Posterior vena cava (tissue), 2 donors: ENCODE measurements at regions of chr1 and their contacts with region 1.

Region 1: GRCh38 chr1:56397811-56398231 is 181.5 kb downstream of the PLPP3 start:
- DNase-seq: no peak

Region 2: DNA sequence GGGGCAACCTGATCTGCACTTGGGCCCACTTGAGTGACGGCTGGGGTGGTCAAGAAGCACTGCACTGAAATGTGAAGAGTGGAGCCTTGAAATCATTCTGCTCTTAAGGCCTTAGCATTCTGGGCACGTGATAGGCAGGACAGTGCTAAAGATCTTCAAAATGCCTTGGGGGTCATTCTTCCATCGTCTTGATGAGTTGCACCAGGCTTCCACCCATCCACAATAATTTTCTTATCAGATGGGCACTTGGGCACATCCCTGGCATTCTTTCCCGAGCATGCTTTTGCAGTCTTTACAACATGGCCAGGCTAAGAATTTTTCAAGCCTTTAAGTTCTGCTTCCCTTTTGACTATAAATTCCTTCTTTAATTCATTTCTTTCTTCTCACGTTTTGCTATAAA is 357.1 kb before region 1 on chr1:
- intact Hi-C with region 1: loop called in 1 of 2 experiments (anchors 5 kb)
- DNase-seq: no peak

Region 3: GRCh38 chr1:56424744-56425508 is 27.1 kb after region 1 on chr1:
- intact Hi-C with region 1: loop called in 1 of 2 experiments (anchors 1 kb)
- DNase-seq: peak; percentile 87

Region 4: DNA sequence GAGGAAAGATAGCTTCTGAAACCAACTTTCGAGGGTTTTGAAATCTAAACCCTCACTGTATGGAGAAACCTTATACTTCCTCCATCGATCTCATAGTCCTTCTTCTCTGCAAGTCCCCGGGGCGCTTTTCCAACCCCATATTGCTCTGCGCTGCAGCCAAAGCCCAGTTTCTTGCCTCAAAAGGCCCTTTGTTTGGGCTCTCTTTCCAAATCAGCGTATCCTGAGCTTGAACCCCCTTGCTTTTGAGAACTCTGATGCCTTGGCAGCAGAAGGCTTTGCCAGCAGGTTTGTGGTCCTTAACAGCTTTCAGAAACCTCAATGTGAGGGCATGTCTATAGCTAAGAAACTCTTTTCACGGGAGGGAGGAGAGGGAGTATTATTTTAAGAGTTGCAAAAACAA is 159.9 kb after region 1 on chr1:
- intact Hi-C with region 1: no loop called
- DNase-seq: no peak